ENCODE measurements at regions of chr5 and their contacts with region 1.

Region 1: DNA sequence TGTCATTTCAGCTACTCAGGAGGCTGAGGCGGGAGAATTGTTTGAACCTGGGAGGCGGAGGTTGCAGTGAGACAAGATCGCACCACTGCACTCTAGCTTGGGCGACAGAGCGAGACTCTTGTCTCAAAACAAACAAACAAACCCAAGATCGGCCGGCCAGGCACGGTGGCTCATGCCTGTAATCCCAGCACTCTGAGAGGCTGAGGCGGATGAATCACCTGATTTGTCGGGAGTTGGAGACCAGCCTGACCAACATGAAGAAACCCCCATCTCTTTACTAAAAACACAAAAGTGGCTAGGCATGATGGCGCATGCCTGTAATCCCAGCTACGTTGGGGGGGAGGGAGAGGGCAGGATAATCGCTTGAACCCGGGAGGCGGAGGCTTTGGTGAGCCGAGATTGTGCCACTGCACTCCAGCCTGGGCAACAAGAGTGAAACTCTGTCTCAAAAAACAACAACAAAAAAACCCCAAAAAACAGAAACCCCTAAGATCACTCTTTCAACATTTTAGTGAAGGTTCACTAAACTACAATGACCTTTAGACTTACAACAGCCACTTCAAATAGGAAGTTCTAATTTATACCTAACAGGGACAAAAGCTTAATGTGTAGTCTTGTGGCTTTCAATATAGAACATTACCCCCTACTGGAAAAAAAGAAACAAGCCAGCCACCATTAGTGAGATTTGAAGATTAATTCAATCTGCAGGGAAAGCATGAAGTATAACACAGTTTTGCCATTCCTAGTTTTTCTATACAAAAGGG is 7.0 kb downstream of the HSPA9 start:
- DNase-seq: no peak
- H3K4me3 ChIP-seq: no peak overlapping the region
- H3K4me3 Mint-ChIP-seq: no peak overlapping the region
- H3K27ac Mint-ChIP-seq: no peak overlapping the region
- H3K4me1 ChIP-seq: 0 out of 2 replicates have a peak, but pooled peaks cover 4% of the 10 kb centered on the region
- H3K4me1 Mint-ChIP-seq: peaks cover 15% of the 10 kb centered on the region
- H3K27me3 ChIP-seq: no peaks in the 10 kb centered on the region
- H3K27me3 Mint-ChIP-seq: no peaks in the 10 kb centered on the region
- CTCF ChIP-seq: no peak

Region 2: DNA sequence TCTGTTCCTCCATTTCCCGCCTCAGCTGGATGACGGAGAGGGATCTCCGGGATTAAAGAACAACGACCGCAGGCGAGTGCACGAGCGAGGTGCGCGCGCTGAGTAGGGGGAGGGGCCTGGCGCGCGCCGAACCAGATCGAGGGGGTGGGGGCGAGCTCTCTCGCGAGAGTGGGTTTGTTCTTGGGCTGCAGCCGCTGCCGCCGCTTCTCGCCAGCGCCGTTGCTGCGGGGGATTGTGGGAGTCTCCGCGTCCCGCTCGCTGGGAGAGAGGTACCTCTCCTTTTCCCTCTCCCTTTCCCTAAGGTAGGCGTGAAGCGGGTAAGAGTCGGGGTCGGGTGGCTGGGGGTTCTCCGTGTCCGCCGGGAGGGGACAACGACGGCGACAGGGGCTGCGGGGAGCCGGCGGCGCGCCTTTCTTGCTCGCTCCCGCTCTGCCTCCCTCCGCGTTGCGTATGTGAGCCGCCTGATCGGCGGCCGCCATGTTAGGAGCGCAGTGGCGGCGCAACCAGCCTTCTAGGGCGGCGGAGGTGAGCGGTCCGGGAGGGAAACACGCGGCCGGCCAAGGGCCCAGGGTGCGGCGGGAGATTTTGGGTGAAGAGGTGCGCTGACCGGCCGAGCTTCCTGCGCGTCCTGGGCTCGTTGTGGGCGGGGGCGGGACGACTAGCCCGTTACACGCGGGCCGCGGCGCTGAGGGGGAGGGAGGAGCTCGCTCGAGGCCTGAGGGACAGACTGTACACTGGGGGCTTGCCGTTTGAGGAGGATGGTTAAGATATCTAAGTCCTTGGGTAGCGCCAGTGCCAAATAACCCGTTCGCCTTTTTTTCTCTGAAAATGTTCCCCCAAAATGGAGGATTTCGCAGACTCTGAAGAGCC is 725.5 kb after region 1 on chr5 and contains the start of gene MATR3:
- CTCF ChIA-PET with region 1: no interaction called
- POLR2A ChIA-PET with region 1: interaction called, 14 read pairs
- intact Hi-C with region 1: no loop called
- DNase-seq: peak; percentile 96
- H3K4me3 ChIP-seq: peak within 1 kb of the TSS; percentile 76
- H3K4me3 Mint-ChIP-seq: peak within 1 kb of the TSS; percentile 96
- H3K27ac Mint-ChIP-seq: peak within 1 kb of the TSS; percentile 99
- H3K4me1 ChIP-seq: peaks cover 12% of the 10 kb centered on the region; the same call in 1 of the 2 replicates
- H3K4me1 Mint-ChIP-seq: peaks cover 21% of the 10 kb centered on the region
- H3K27me3 ChIP-seq: no peaks in the 10 kb centered on the region
- H3K27me3 Mint-ChIP-seq: no peaks in the 10 kb centered on the region
- CTCF ChIP-seq: no peak
- total RNA-seq, gene MATR3: 194 and 200 TPM in 2 replicates

Measured in Caco-2 (cell line).